OCI-LY7 (cell line): ENCODE measurements at regions of chr2 and their contacts with region 1.

Region 1: DNA sequence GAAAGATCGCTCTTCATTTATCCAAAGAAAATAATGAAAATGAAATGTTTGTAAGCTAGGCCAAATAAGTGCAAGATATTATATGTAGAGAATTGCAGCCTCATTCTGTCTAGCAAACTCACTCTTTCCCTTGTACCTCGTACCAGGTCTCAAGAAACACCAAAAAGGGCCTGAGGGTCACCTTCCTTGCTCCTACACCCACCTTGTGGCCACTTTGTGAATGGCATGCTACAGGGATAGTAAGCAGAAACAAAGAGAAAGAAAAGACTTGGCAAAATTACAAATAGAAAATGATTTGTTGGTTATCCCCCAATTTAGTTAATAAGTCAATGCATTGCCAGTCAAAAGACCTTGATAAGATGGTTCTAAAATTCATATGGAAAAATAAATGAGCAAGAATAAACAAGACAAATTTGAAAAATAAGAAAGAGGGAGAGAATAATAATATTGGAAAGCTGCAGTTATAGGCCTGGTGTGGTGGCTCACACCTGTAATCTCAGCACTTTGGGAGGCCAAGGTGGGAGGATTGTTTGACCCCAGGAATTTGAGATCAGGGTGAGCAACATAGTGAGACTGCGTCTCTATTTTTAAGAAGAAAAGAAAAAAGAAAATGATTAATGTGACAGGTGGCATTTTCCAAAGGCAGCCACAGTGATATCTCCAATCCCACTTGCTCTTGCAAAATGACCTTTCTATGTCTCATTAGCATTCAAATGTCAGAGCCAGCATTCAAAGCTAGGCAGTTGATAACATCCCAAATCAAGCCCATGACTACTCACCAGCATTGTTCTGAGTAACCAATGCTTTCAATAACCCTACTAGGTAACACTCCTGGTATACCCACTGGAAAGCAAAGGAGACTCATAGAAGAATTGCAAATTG is 38.8 kb upstream of the BMP10 start:
- DNase-seq: peak; percentile 87
- H3K4me3 ChIP-seq: no peak overlapping the region
- H3K27ac ChIP-seq: no peak overlapping the region
- H3K4me1 ChIP-seq: peaks cover 36% of the 10 kb centered on the region
- CTCF ChIP-seq: peak; percentile 90

Region 2: GRCh38 chr2:68467077-68467960 is 442.7 kb before region 1 on chr2 and contains the starts of genes APLF and FBXO48:
- CTCF ChIA-PET with region 1: interaction called, 3 read pairs
- POLR2A ChIA-PET with region 1: interaction called, 12 read pairs
- intact Hi-C with region 1: loop called (anchors 2 kb)
- DNase-seq: peak; percentile 99
- H3K4me3 ChIP-seq: peak within 1 kb of the TSS; percentile 82
- H3K27ac ChIP-seq: peak within 1 kb of the TSS; percentile 49
- H3K4me1 ChIP-seq: peaks cover 41% of the 10 kb centered on the region
- CTCF ChIP-seq: no peak
- total RNA-seq, gene APLF: 6.1 and 8.8 TPM in 2 replicates
- total RNA-seq, gene FBXO48: 1.5 and 1.8 TPM in 2 replicates

Region 3: DNA sequence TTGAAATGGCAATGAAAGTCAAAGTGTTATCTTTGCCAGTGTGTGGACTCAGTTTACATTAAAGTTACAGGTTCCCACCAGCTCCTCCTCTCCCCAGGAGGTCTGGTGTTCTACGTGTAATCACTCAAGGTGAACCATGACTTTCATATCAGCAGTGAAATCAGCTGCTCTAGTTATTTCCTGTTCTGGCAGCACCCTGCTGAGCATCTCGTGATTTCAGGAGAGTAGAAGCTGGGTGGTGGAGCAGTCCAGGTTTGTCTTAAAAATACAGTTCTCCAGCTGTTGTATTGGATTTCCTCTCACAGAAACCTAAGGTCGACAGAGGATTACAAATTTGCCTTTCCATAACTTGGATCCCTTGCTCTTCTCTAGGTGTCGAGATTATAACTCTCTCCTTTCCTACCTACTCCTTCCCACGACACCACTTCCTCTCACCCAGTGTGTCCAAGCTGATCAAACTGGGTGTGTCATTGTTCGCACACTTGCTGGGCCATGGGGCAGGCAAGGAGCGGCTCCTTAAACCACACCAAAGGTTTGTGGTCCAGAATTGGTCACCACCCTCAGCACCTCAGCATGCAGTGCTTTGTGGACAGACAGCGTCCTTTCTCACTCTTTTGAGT is 188.4 kb before region 1 on chr2:
- CTCF ChIA-PET with region 1: interaction called, 7 read pairs
- POLR2A ChIA-PET with region 1: interaction called, 10 read pairs
- intact Hi-C with region 1: no loop called
- DNase-seq: peak; percentile 73
- H3K4me3 ChIP-seq: peak overlapping the region; percentile 32
- H3K27ac ChIP-seq: peak overlapping the region; percentile 59
- H3K4me1 ChIP-seq: peaks cover 60% of the 10 kb centered on the region
- CTCF ChIP-seq: no peak

Region 4: DNA sequence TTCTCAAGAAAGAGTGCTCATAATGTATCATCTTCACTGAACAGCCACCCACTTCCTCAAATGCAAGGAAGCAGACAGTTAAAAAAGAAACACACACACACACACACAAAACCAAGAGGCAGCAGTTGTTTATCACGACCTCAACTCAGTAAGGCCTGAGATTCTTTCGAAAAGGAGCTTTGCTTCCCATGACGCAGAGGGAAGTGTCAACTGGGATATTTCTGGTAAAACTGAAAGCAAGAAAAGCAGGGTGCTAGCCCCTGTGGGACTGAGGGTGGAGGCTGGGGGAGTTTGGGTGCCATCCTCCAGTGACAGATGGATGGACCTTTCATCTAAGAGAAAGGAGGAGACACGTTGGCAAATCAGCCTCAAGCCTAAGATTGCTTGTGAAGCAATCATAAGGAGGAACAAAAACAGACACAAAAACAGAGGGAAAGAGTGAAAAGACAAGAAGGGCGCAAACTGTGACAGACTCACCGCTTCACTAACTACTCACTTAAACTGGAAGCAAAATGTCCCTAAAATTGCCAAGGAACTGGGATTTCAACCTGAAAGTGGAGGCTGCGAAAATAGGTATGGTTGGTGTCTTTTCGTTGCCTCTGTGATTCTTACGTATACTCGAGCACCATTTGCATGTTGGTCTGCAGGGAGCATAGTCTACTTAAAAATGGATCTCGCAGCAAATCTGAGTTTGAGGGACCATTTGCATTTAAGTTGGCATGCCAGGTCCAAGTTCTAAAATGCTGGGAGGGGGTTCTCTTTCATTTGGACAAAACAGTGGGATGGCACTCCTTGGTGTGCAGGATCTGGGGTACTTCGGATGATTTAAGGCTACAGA is 175.1 kb before region 1 on chr2 and contains the start of gene ARHGAP25:
- CTCF ChIA-PET with region 1: interaction called, 7 read pairs
- POLR2A ChIA-PET with region 1: interaction called, 14 read pairs
- intact Hi-C with region 1: no loop called
- DNase-seq: peak; percentile 85
- H3K4me3 ChIP-seq: peak within 1 kb of the TSS; percentile 73
- H3K27ac ChIP-seq: peak within 1 kb of the TSS; percentile 94
- H3K4me1 ChIP-seq: peaks cover 55% of the 10 kb centered on the region
- CTCF ChIP-seq: no peak
- total RNA-seq, gene ARHGAP25: 18.6 and 22.3 TPM in 2 replicates

Region 5: GRCh38 chr2:68766376-68766845 is 143.6 kb before region 1 on chr2:
- CTCF ChIA-PET with region 1: no interaction called
- POLR2A ChIA-PET with region 1: interaction called, 20 read pairs
- intact Hi-C with region 1: loop called (anchors 5 kb)
- DNase-seq: peak; percentile 84
- H3K4me3 ChIP-seq: peak overlapping the region; percentile 67
- H3K27ac ChIP-seq: peak overlapping the region; percentile 93
- H3K4me1 ChIP-seq: peaks cover 100% of the 10 kb centered on the region
- CTCF ChIP-seq: no peak; the same call in 1 of the 2 replicates

Region 6: GRCh38 chr2:68837164-68837860 is 72.7 kb before region 1 on chr2:
- CTCF ChIA-PET with region 1: no interaction called
- POLR2A ChIA-PET with region 1: interaction called, 5 read pairs
- intact Hi-C with region 1: loop called (anchors 1 kb)
- DNase-seq: peak; percentile 85
- H3K4me3 ChIP-seq: no peak overlapping the region
- H3K27ac ChIP-seq: no peak overlapping the region
- H3K4me1 ChIP-seq: peaks cover 50% of the 10 kb centered on the region
- CTCF ChIP-seq: peak; percentile 97